Naive thymus-derived CD4-positive, alpha-beta T cell (primary cell): ENCODE measurements at regions of chr5 and their contacts with region 1.

Region 1: GRCh38 chr5:96662725-96663513 is 743 bp downstream of the CAST start:
- DNase-seq: peak; percentile 72 to 90 (median 82)
- ATAC-seq: peak; percentile 84
- H3K4me3 ChIP-seq: peak overlapping the region; percentile 86
- H3K4me3 Mint-ChIP-seq: peak overlapping the region; percentile 86 to 100 (median 95)
- H3K27ac ChIP-seq: peak overlapping the region; percentile 87
- H3K27ac Mint-ChIP-seq: peak overlapping the region; percentile 76 to 99 (median 95)
- H3K4me1 ChIP-seq: peaks cover 20 to 26% of the 10 kb centered on the region in 2 donors
- H3K4me1 Mint-ChIP-seq: peaks cover 30 to 64% (median 50%) of the 10 kb centered on the region in 7 donors
- H3K27me3 ChIP-seq: no peaks in the 10 kb centered on the region
- H3K27me3 Mint-ChIP-seq: peaks cover 0 to 14% (median 0%) of the 10 kb centered on the region in 5 donors

Region 2: DNA sequence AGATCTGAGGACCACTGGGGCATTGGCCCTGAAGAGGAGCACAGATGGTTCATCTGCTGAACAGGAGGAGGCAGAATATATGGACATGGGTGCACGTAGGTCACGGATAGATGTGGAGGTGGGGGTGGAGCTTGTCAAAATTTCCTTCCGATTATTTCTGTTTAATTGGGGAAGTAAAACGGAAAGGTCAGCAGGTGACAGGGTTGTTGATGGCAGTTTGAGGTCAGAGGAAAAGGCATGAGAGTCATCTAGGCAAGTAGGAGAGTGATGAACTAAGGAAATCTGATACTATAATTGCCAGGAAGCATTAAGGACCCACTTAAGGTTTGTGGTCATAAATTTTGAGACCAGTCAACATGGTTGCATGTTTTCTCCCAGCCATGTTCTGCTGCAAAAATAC is 1280.1 kb before region 1 on chr5:
- CTCF ChIA-PET with region 1: no interaction called
- POLR2A ChIA-PET with region 1: no interaction called
- intact Hi-C with region 1: no loop called
- DNase-seq: no peak
- ATAC-seq: no peak
- H3K4me3 ChIP-seq: no peak overlapping the region
- H3K4me3 Mint-ChIP-seq: no peak overlapping the region
- H3K27ac ChIP-seq: no peak overlapping the region
- H3K27ac Mint-ChIP-seq: no peak overlapping the region
- H3K4me1 ChIP-seq: no peaks in the 10 kb centered on the region
- H3K4me1 Mint-ChIP-seq: peaks cover 7 to 16% (median 11%) of the 10 kb centered on the region in 7 donors
- H3K27me3 ChIP-seq: no peaks in the 10 kb centered on the region
- H3K27me3 Mint-ChIP-seq: peaks cover 0 to 13% (median 7%) of the 10 kb centered on the region in 5 donors

Region 3: GRCh38 chr5:95646554-95647431 is 1016.1 kb before region 1 on chr5 and contains the start of gene RFESD:
- CTCF ChIA-PET with region 1: no interaction called
- POLR2A ChIA-PET with region 1: interaction called, 3 read pairs
- intact Hi-C with region 1: loop called (anchors 1 to 5 kb)
- DNase-seq: peak; percentile 84 to 94 (median 90)
- ATAC-seq: peak; percentile 98
- H3K4me3 ChIP-seq: peak within 1 kb of the TSS; percentile 80
- H3K4me3 Mint-ChIP-seq: peak within 1 kb of the TSS; percentile 84 to 93 (median 88)
- H3K27ac ChIP-seq: peak within 1 kb of the TSS; percentile 80
- H3K27ac Mint-ChIP-seq: peak within 1 kb of the TSS; percentile 71 to 95 (median 89)
- H3K4me1 ChIP-seq: peaks cover 0 to 18% of the 10 kb centered on the region in 2 donors
- H3K4me1 Mint-ChIP-seq: peaks cover 7 to 53% (median 40%) of the 10 kb centered on the region in 7 donors
- H3K27me3 ChIP-seq: no peaks in the 10 kb centered on the region
- H3K27me3 Mint-ChIP-seq: no peaks in the 10 kb centered on the region
- total RNA-seq, gene RFESD: 2.2 to 9.2 (median 6.5) TPM

Region 4: DNA sequence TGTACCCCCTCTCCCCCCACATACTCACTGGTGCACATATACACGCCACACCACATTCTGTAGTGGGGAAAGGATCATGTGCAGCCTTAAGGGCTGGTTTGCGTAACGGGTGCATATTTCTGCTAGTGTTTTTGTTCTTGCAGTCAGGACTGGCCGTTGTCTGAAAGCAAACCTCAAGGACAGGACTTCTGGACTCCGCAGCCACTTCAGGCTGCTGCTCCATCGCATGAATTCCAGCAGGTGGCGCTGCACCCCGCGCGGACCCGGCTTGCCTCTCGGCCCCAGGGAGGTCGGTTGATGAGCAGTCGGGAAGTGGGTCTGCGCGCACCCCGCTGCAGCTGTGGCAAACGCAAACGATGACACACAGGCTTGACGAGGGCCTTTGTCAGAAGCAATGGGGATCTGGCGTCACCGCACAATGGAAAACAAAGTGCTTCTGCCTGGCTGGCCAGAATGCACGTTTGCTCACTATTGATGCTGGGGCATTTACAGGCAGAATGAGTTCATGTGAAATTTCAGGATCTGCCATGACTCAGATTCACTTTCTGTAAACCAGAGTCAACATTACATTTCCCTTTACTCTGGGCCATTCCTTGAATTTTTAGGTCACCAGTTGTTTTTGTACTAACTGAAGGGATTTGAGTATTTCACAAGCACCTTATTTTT is 804.1 kb before region 1 on chr5:
- CTCF ChIA-PET with region 1: no interaction called
- POLR2A ChIA-PET with region 1: no interaction called
- intact Hi-C with region 1: loop called (anchors 2 to 5 kb)
- DNase-seq: peak; percentile 81 to 91 (median 87)
- ATAC-seq: peak; percentile 94
- H3K4me3 ChIP-seq: no peak overlapping the region
- H3K4me3 Mint-ChIP-seq: peak overlapping the region; percentile 25 to 78 (median 62)
- H3K27ac ChIP-seq: no peak overlapping the region
- H3K27ac Mint-ChIP-seq: peak overlapping the region; percentile 10 to 85 (median 56)
- H3K4me1 ChIP-seq: no peaks in the 10 kb centered on the region
- H3K4me1 Mint-ChIP-seq: peaks cover 11 to 43% (median 16%) of the 10 kb centered on the region in 7 donors
- H3K27me3 ChIP-seq: no peaks in the 10 kb centered on the region
- H3K27me3 Mint-ChIP-seq: peaks cover 0 to 18% (median 14%) of the 10 kb centered on the region in 5 donors

Region 5: GRCh38 chr5:96614110-96614691 is 48.7 kb before region 1 on chr5:
- CTCF ChIA-PET with region 1: interaction called, 4 read pairs
- POLR2A ChIA-PET with region 1: interaction called, 3 read pairs
- intact Hi-C with region 1: loop called (anchors 1 to 2 kb)
- DNase-seq: peak in 6 of 9 donors; percentile 30 to 51 (median 38)
- ATAC-seq: peak; percentile 72
- H3K4me3 ChIP-seq: no peak overlapping the region
- H3K4me3 Mint-ChIP-seq: no peak overlapping the region
- H3K27ac ChIP-seq: no peak overlapping the region
- H3K27ac Mint-ChIP-seq: no peak overlapping the region
- H3K4me1 ChIP-seq: peaks cover 0 to 5% of the 10 kb centered on the region in 2 donors
- H3K4me1 Mint-ChIP-seq: peaks cover 0 to 5% (median 0%) of the 10 kb centered on the region in 7 donors
- H3K27me3 ChIP-seq: no peaks in the 10 kb centered on the region
- H3K27me3 Mint-ChIP-seq: peaks cover 5 to 43% (median 8%) of the 10 kb centered on the region in 5 donors

Region 6: GRCh38 chr5:96702503-96703383 is 39.8 kb after region 1 on chr5:
- CTCF ChIA-PET with region 1: interaction called, 3 read pairs
- POLR2A ChIA-PET with region 1: interaction called, 32 read pairs
- intact Hi-C with region 1: loop called (anchors 1 kb)
- DNase-seq: peak; percentile 60 to 88 (median 77)
- ATAC-seq: peak; percentile 91
- H3K4me3 ChIP-seq: peak overlapping the region; percentile 75
- H3K4me3 Mint-ChIP-seq: peak overlapping the region; percentile 87 to 98 (median 94)
- H3K27ac ChIP-seq: peak overlapping the region; percentile 82
- H3K27ac Mint-ChIP-seq: peak overlapping the region; percentile 90 to 98 (median 96)
- H3K4me1 ChIP-seq: peaks cover 7 to 20% of the 10 kb centered on the region in 2 donors
- H3K4me1 Mint-ChIP-seq: peaks cover 18 to 56% (median 29%) of the 10 kb centered on the region in 7 donors
- H3K27me3 ChIP-seq: no peaks in the 10 kb centered on the region
- H3K27me3 Mint-ChIP-seq: no peaks in the 10 kb centered on the region

Region 7: DNA sequence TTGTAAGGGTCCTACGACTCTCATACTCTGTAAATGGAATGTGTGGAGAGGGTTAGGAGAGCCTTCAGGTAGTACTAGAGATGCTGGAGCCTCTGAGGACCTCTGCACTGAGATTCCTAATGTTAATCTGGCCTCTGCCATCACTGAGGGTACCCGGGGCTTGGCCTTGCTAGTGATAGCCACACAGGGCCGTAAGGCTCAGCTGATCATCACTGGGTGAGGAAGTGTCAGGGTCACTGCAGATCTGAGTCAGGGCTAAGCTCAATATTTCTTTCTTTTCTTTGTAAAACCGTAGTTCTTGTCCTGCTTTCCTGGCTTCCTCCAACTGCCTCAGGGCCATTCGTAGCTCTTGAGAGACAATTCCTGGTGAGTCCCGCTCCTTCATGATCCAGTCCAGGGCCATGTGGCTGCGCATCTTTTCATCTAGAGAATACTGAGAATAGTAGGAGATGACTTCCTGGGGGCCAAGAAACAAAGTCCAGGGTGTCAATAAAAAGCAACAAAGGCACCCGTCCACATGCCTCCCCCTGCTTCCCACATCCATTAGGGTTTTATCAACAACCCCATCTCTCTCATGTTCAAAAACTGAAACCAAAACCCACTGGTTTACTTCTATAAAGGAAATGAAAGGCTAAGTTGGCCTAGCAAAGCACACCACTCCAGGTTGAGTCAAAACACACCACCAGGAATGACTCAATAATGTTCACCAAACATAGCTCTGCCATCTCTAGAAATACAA is 431.8 kb after region 1 on chr5:
- CTCF ChIA-PET with region 1: no interaction called
- POLR2A ChIA-PET with region 1: no interaction called
- intact Hi-C with region 1: loop called in 1 of 2 experiments (anchors 2 kb)
- DNase-seq: peak in 1 of 9 donors; percentile 28
- ATAC-seq: no peak
- H3K4me3 ChIP-seq: no peak overlapping the region
- H3K4me3 Mint-ChIP-seq: peak overlapping the region in 1 of 10 donors; percentile 62
- H3K27ac ChIP-seq: no peak overlapping the region
- H3K27ac Mint-ChIP-seq: peak overlapping the region in 1 of 9 donors; percentile 63
- H3K4me1 ChIP-seq: no peaks in the 10 kb centered on the region
- H3K4me1 Mint-ChIP-seq: peaks cover 0 to 20% (median 5%) of the 10 kb centered on the region in 7 donors
- H3K27me3 ChIP-seq: no peaks in the 10 kb centered on the region
- H3K27me3 Mint-ChIP-seq: peaks cover 0 to 43% (median 1%) of the 10 kb centered on the region in 5 donors